ENCODE measurements at regions of chr3 and their contacts with region 1.

Region 1: DNA sequence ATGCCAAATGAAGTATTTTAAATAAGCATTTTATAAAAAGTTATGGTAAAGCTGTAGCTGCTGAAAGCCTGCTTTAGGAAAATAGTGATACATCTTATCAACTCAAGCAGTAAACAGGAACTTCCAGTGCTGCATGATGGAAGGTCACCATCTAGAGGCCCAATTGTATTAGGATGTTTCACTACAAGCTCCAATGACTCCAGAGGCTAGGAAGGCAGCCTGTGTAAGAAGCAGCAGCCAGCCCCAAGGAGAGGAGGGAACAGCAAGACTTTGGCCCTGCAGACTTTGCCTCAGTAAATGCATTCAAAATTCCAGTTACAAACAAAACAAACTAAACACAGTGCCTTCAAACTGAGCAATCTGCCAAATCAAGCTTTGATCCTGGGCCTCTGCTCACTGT is 32.1 kb downstream of the ILDR1 start:
- DNase-seq: no peak
- H3K4me3 ChIP-seq: no peak overlapping the region
- H3K27ac ChIP-seq: no peak overlapping the region
- H3K4me1 ChIP-seq: peaks cover under 1% of the 10 kb centered on the region
- H3K27me3 ChIP-seq: no peaks in the 10 kb centered on the region
- CTCF ChIP-seq: peak; percentile 7 to 50

Region 2: GRCh38 chr3:121855555-121855954 is 134.4 kb before region 1 on chr3:
- CTCF ChIA-PET with region 1: no interaction called
- dilution Hi-C with region 1: no loop called
- in situ Hi-C with region 1: no loop called
- intact Hi-C with region 1: loop called (anchors 1 kb)
- DNase-seq: peak; percentile 31
- H3K4me3 ChIP-seq: no peak overlapping the region
- H3K27ac ChIP-seq: no peak overlapping the region
- H3K4me1 ChIP-seq: peaks cover 8% of the 10 kb centered on the region
- H3K27me3 ChIP-seq: no peaks in the 10 kb centered on the region
- CTCF ChIP-seq: peak; percentile 44 to 65

Region 3: DNA sequence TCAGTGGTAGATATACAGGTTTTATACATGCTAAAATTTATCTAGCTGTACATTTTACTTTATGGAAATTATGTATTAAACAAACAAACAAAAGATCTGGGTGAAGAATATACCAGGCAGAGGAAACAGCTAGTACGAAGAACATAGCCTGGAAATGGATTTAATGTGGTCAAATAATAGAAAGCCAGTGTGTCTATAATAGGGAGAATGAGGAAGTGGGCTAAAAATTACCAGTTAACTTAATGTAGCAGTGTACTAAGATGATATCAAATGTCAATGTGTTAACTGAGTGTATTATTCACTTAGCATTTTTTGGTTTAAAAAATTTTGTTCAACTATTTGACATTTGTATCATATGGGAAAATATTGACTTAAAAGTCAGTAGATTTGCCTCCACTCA is 118.5 kb before region 1 on chr3:
- CTCF ChIA-PET with region 1: no interaction called
- dilution Hi-C with region 1: no loop called
- in situ Hi-C with region 1: no loop called
- intact Hi-C with region 1: no loop called
- DNase-seq: no peak
- H3K4me3 ChIP-seq: no peak overlapping the region
- H3K27ac ChIP-seq: no peak overlapping the region
- H3K4me1 ChIP-seq: no peaks in the 10 kb centered on the region
- H3K27me3 ChIP-seq: no peaks in the 10 kb centered on the region
- CTCF ChIP-seq: no peak

Region 4: GRCh38 chr3:121883507-121883906 is 106.4 kb before region 1 on chr3:
- CTCF ChIA-PET with region 1: no interaction called
- dilution Hi-C with region 1: no loop called
- in situ Hi-C with region 1: no loop called
- intact Hi-C with region 1: loop called (anchors 1 kb)
- DNase-seq: peak; percentile 46
- H3K4me3 ChIP-seq: no peak overlapping the region
- H3K27ac ChIP-seq: no peak overlapping the region
- H3K4me1 ChIP-seq: peaks cover 10% of the 10 kb centered on the region
- H3K27me3 ChIP-seq: no peaks in the 10 kb centered on the region
- CTCF ChIP-seq: peak; percentile 45 to 56

Region 5: DNA sequence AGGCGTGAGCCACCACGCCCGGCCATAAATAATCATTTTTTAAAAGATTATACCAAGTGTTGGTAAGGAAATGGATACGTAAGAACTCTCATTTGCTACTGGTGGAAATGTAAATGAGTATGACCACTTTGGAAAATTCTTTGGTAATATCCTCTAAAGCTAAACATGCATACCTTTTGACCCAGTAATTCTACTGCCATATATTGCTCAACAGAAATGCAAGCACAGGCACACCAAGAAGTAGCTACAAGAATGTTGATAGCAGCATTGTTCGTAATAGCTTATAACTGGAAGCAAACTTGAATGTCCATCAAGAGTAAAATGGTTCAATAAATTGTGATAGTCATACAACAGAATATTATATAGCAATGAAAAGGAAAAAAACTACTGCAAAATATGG is 188.8 kb after region 1 on chr3:
- CTCF ChIA-PET with region 1: no interaction called
- dilution Hi-C with region 1: no loop called
- in situ Hi-C with region 1: no loop called
- intact Hi-C with region 1: no loop called
- DNase-seq: no peak
- H3K4me3 ChIP-seq: no peak overlapping the region
- H3K27ac ChIP-seq: no peak overlapping the region
- H3K4me1 ChIP-seq: peaks cover 4% of the 10 kb centered on the region
- H3K27me3 ChIP-seq: peaks cover 6% of the 10 kb centered on the region
- CTCF ChIP-seq: no peak

Region 6: DNA sequence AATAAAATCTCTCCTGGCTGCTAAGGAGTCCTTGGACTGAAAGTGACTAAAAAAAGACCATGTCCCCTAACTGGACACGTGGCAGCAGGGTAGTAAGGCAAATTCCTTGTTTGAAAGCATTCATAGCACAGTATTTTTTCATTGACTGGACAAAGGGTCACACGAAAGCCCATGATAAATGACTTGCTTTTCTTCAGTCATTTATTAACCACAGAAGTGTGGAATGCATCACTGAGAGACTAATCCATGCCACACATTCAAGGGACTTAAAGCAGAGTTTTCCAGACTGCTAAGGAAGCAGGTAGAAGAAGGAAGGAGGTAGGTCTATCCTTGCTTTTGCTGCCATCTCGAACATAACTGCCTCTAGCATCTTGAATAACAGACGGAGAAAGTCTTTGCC is 224.8 kb after region 1 on chr3:
- CTCF ChIA-PET with region 1: no interaction called
- dilution Hi-C with region 1: no loop called
- in situ Hi-C with region 1: no loop called
- intact Hi-C with region 1: no loop called
- DNase-seq: no peak
- H3K4me3 ChIP-seq: no peak overlapping the region
- H3K27ac ChIP-seq: no peak overlapping the region
- H3K4me1 ChIP-seq: no peaks in the 10 kb centered on the region
- H3K27me3 ChIP-seq: peaks cover 3% of the 10 kb centered on the region
- CTCF ChIP-seq: no peak

Measured in mammary epithelial cell (primary cell).